ENCODE measurements at regions of chr20 and their contacts with region 1.

Region 1: GRCh38 chr20:20353576-20353975 is 14.3 kb upstream of the INSM1 start:
- DNase-seq: no peak
- ATAC-seq: no peak
- H3K4me3 ChIP-seq: no peak overlapping the region
- H3K4me3 Mint-ChIP-seq: no peak overlapping the region
- H3K27ac ChIP-seq: no peak overlapping the region
- H3K27ac Mint-ChIP-seq: no peak overlapping the region
- H3K4me1 ChIP-seq: no peaks in the 10 kb centered on the region
- H3K4me1 Mint-ChIP-seq: no peaks in the 10 kb centered on the region
- H3K27me3 ChIP-seq: peaks cover 0 to 5% (median 2%) of the 10 kb centered on the region in 4 experiments
- H3K27me3 Mint-ChIP-seq: peaks cover 34% of the 10 kb centered on the region
- CTCF ChIP-seq: no peak

Region 2: GRCh38 chr20:20286061-20286460 is 67.5 kb before region 1 on chr20:
- CTCF ChIA-PET with region 1: no interaction called
- POLR2A ChIA-PET with region 1: no interaction called
- intact Hi-C with region 1: no loop called
- DNase-seq: no peak
- ATAC-seq: no peak
- H3K4me3 ChIP-seq: no peak overlapping the region
- H3K4me3 Mint-ChIP-seq: no peak overlapping the region
- H3K27ac ChIP-seq: no peak overlapping the region
- H3K27ac Mint-ChIP-seq: no peak overlapping the region
- H3K4me1 ChIP-seq: no peaks in the 10 kb centered on the region
- H3K4me1 Mint-ChIP-seq: no peaks in the 10 kb centered on the region
- H3K27me3 ChIP-seq: peaks cover 0 to 7% (median 2%) of the 10 kb centered on the region in 4 experiments
- H3K27me3 Mint-ChIP-seq: peaks cover 42% of the 10 kb centered on the region
- CTCF ChIP-seq: no peak

Region 3: GRCh38 chr20:20887593-20888265 is 534.2 kb after region 1 on chr20:
- CTCF ChIA-PET with region 1: no interaction called
- POLR2A ChIA-PET with region 1: no interaction called
- intact Hi-C with region 1: loop called (anchors 5 kb)
- DNase-seq: no peak
- ATAC-seq: no peak
- H3K4me3 ChIP-seq: no peak overlapping the region
- H3K4me3 Mint-ChIP-seq: no peak overlapping the region
- H3K27ac ChIP-seq: no peak overlapping the region
- H3K27ac Mint-ChIP-seq: no peak overlapping the region
- H3K4me1 ChIP-seq: no peaks in the 10 kb centered on the region
- H3K4me1 Mint-ChIP-seq: no peaks in the 10 kb centered on the region
- H3K27me3 ChIP-seq: no peaks in the 10 kb centered on the region
- H3K27me3 Mint-ChIP-seq: peaks cover 19% of the 10 kb centered on the region
- CTCF ChIP-seq: no peak

Measured in B cell (primary cell).